ENCODE measurements at regions of chr3 and their contacts with region 1.

Region 1: GRCh38 chr3:194134757-194135528 is 1.0 kb upstream of the HES1 start:
- DNase-seq: peak; percentile 93

Region 2: GRCh38 chr3:193788189-193788991 is 346.6 kb before region 1 on chr3:
- intact Hi-C with region 1: loop called (anchors 2 kb)
- DNase-seq: no peak

Region 3: DNA sequence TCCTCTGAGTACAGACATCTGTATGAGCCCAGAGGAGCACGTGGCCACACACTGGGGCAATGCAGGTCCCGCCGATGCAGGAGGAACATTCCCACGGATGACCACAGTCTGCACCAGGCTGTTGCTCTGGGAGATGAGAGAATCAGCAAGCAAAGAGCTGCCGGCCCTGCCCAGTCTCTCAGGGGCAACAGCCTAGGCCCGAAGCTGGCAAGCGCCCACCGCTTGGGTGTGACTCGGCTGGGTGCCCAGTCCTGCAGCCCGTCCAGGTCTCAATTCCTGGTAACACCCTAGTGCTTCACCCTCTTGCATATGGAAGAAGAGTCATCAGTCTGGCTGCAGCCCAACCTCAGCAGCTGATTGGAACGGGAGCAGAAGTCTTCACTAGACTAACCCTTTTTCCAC is 152.7 kb before region 1 on chr3:
- intact Hi-C with region 1: loop called (anchors 5 kb)
- DNase-seq: peak; percentile 89

Region 4: DNA sequence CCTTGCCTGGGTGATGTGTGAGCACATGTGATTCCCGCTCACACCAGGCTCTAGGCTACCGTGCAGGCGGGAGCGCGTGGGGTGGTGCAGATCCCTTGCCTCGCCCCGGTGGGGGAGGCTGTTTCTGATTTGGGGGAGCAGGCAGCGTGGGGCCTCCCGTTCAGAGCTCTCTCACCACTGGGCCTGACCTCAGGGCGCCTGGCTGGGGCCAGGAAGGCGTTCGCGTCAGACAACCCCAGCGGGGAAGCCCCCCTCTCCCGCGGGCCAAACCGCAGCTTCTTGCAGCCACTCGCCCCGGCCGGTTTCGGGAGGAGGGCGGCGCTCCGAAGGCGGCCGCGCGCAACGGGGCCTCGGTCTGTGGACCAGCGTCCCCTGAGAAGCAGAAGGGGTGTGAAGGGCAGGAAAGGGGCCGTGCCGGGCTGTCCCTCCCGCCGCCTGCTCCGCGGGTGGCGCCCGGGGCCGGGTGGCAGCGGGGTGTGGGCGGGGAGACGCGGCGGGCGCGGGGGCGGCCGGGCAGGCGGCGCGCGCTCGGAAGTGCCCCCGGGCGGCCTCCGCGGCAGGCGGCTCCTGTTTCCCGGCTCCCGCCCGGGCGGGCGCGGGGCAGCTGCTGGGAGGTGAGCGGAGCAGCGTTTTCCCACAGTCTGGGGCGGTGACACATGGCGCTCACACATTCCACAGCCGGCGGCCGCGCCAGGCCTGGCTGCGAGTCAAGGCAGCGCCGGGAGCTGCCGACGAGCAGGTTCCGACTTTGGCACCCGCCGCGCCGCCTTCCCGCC is 64.1 kb before region 1 on chr3:
- intact Hi-C with region 1: loop called (anchors 2 kb)
- DNase-seq: peak; percentile 93